ENCODE measurements at regions of chr14 and their contacts with region 1.

Region 1: GRCh38 chr14:74368846-74369245 is 20.6 kb downstream of the VRTN start:
- DNase-seq: no peak
- ATAC-seq: no peak
- H3K4me3 ChIP-seq: no peak overlapping the region
- H3K4me3 Mint-ChIP-seq: no peak overlapping the region
- H3K27ac ChIP-seq: no peak overlapping the region
- H3K27ac Mint-ChIP-seq: no peak overlapping the region
- H3K4me1 ChIP-seq: no peaks in the 10 kb centered on the region
- H3K4me1 Mint-ChIP-seq: no peaks in the 10 kb centered on the region
- H3K27me3 ChIP-seq: peaks cover 0 to 21% of the 10 kb centered on the region in 2 experiments
- H3K27me3 Mint-ChIP-seq: peaks cover 6 to 9% of the 10 kb centered on the region in 2 donors

Region 2: DNA sequence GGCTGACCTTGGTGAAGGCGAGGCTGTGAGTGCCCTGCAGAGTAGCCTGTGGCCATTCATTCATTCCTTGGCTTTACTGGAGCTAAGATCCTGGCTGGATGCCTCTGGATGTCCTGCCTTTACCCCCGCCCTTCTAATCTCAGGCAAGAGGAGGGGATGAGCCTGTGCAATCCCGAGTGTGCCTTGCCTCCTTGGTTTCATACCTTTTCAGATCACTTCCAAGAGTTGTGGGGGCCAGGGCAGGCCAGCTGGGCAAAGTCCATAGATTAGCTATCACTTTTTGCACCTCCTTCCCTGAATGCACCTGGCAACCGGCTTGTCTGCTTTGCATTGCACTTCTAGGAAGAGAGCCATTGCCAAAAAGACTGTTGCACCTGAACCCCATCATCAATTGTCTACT is 19.1 kb before region 1 on chr14:
- CTCF ChIA-PET with region 1: no interaction called
- POLR2A ChIA-PET with region 1: no interaction called
- DNase-seq: no peak
- ATAC-seq: no peak
- H3K4me3 ChIP-seq: no peak overlapping the region
- H3K4me3 Mint-ChIP-seq: no peak overlapping the region
- H3K27ac ChIP-seq: no peak overlapping the region
- H3K27ac Mint-ChIP-seq: no peak overlapping the region
- H3K4me1 ChIP-seq: no peaks in the 10 kb centered on the region
- H3K4me1 Mint-ChIP-seq: no peaks in the 10 kb centered on the region
- H3K27me3 ChIP-seq: peaks cover 2 to 20% of the 10 kb centered on the region in 2 experiments
- H3K27me3 Mint-ChIP-seq: peaks cover 4 to 10% of the 10 kb centered on the region in 2 donors

Region 3: DNA sequence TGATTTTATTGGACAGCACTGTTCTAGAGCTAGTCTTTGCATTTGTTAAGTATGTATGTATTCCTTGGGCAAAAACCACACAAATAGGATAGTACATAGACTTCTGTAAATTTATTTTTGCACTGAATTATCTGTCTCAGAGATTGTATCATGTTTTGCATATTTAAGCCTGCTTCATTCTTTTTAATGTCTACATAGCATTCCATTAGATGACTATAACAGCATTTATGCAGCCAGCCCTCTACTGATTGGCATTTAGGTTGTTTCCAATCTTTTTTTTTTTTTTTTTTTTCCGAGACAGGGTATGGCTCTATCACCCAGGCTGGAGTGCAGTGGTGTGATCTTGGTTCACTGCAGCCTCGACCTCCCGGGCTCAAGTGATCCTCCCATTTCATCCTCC is 22.6 kb after region 1 on chr14:
- CTCF ChIA-PET with region 1: interaction called, 3 to 10 read pairs
- POLR2A ChIA-PET with region 1: interaction called in 1 of 2 experiments, 3 read pairs
- DNase-seq: no peak
- ATAC-seq: no peak
- H3K4me3 ChIP-seq: no peak overlapping the region
- H3K4me3 Mint-ChIP-seq: no peak overlapping the region
- H3K27ac ChIP-seq: no peak overlapping the region
- H3K27ac Mint-ChIP-seq: no peak overlapping the region
- H3K4me1 ChIP-seq: no peaks in the 10 kb centered on the region
- H3K4me1 Mint-ChIP-seq: no peaks in the 10 kb centered on the region
- H3K27me3 ChIP-seq: peaks cover 0 to 27% of the 10 kb centered on the region in 2 experiments
- H3K27me3 Mint-ChIP-seq: peaks cover 5 to 23% of the 10 kb centered on the region in 2 donors

Region 4: DNA sequence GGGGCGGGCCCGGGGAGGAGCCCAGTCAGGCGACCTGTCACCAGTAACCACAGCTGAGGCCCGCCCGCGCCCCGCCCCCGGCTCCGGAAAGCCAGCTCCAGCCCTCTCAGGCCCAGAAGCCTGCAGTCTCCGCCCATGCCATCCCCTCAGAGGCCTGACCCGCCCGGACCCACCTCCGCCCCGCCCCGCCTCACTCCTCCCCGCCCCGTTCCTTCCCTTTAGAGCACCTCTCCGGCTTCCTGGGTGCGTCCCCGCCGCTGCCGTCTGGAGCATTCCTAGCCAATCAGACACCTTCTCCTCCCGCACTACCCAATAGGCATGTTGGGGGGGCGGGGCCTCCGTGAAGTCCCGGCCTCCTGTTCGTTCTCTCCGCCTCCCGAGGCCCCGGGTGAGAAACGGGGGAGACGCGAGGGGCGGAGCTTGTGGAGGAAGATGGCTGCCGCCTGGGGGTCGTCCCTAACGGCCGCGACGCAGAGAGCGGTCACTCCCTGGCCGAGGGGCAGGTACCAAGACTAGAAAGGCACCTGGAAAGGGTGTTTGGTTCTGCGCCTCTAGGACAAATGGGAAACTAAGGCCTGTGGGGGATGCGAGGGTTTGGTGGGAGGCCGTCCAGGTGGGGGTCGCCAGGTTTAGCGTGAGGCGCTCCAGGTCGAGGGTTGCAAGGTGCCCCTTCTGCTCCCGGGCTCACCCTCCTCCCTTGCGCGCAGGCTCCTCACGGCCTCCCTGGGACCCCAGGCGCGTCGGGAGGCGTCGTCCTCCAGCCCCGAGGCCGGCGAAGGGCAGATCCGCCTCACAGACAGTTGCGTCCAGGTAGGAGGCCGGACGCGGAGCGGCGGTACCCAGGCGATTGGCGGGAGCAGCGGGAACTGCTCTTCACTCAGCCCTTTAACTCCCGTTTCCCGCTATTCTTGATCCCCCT is 124.8 kb after region 1 on chr14 and contains the start of gene ISCA2:
- CTCF ChIA-PET with region 1: no interaction called
- POLR2A ChIA-PET with region 1: no interaction called
- DNase-seq: peak; percentile 96 to 100 (median 99)
- ATAC-seq: peak; percentile 92 to 93 (median 92)
- H3K4me3 ChIP-seq: peak within 1 kb of the TSS; percentile 79 to 89
- H3K4me3 Mint-ChIP-seq: no peak within 1 kb of the TSS
- H3K27ac ChIP-seq: peak within 1 kb of the TSS; percentile 67
- H3K27ac Mint-ChIP-seq: peak within 1 kb of the TSS; percentile 92
- H3K4me1 ChIP-seq: peaks cover 9 to 21% of the 10 kb centered on the region in 2 experiments
- H3K4me1 Mint-ChIP-seq: peaks cover 34 to 51% (median 34%) of the 10 kb centered on the region in 3 donors
- H3K27me3 ChIP-seq: peaks cover 0 to 3% of the 10 kb centered on the region in 2 experiments
- H3K27me3 Mint-ChIP-seq: no peaks in the 10 kb centered on the region
- total RNA-seq, gene ISCA2: 21.3 to 42.6 (median 34.1) TPM

Measured in T-cell (primary cell).